ENCODE measurements at regions of chr3 and their contacts with region 1.

Region 1: GRCh38 chr3:46089237-46090011 is 62.1 kb upstream of the XCR1 start:
- DNase-seq: peak in 2 of 5 donors; percentile 34 to 86
- H3K4me3 ChIP-seq: no peak overlapping the region
- H3K27ac ChIP-seq: no peak overlapping the region
- H3K4me1 ChIP-seq: no peaks in the 10 kb centered on the region
- H3K27me3 ChIP-seq: no peaks in the 10 kb centered on the region
- CTCF ChIP-seq: no peak

Region 2: GRCh38 chr3:46186471-46187340 is 97.3 kb after region 1 on chr3:
- intact Hi-C with region 1: no loop called
- DNase-seq: no peak
- H3K4me3 ChIP-seq: no peak overlapping the region
- H3K27ac ChIP-seq: no peak overlapping the region
- H3K4me1 ChIP-seq: no peaks in the 10 kb centered on the region
- H3K27me3 ChIP-seq: no peaks in the 10 kb centered on the region
- CTCF ChIP-seq: no peak

Region 3: DNA sequence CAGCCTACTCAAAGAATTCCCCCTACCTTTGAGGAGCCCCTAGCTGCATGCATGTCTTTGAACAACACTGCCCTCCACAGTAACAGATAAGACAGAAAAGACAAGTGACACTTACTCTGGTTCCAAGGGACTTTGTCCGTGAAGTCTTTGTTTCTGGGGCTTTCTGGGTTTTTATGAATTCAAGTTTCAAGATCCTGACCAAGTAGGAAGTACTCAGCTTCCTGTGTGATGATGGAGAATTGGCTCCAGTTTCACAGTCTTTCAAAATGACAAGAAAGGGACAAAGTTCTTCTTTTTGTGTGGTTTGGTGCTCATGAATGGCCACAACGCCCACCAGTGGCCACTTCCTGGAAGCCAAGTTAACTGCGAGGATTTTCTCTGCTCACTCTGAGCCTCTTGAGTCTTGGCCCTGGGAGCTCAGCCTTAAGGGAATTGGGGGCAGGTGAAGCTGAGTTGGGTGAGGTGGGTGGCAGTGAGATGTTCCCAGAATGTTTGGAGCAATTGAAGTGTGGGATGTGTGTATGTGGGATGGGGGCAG is 118.8 kb after region 1 on chr3 and contains the start of gene CCR1:
- intact Hi-C with region 1: loop called (anchors 10 kb)
- DNase-seq: peak in 2 of 5 donors; percentile 13 to 47
- H3K4me3 ChIP-seq: peak within 1 kb of the TSS in 2 of 3 donors; percentile 31 to 36
- H3K27ac ChIP-seq: peak within 1 kb of the TSS; percentile 2 to 43
- H3K4me1 ChIP-seq: peaks cover 0 to 3% (median 0%) of the 10 kb centered on the region in 3 donors
- H3K27me3 ChIP-seq: no peaks in the 10 kb centered on the region
- CTCF ChIP-seq: peak; percentile 54
- total RNA-seq, gene CCR1: 13.8 TPM

Region 4: GRCh38 chr3:46334741-46335478 is 245.5 kb after region 1 on chr3:
- intact Hi-C with region 1: no loop called
- DNase-seq: peak in 2 of 5 donors; percentile 1 to 25
- H3K4me3 ChIP-seq: no peak overlapping the region
- H3K27ac ChIP-seq: no peak overlapping the region
- H3K4me1 ChIP-seq: peaks cover 0 to 2% (median 0%) of the 10 kb centered on the region in 3 donors
- H3K27me3 ChIP-seq: no peaks in the 10 kb centered on the region
- CTCF ChIP-seq: no peak

Region 5: DNA sequence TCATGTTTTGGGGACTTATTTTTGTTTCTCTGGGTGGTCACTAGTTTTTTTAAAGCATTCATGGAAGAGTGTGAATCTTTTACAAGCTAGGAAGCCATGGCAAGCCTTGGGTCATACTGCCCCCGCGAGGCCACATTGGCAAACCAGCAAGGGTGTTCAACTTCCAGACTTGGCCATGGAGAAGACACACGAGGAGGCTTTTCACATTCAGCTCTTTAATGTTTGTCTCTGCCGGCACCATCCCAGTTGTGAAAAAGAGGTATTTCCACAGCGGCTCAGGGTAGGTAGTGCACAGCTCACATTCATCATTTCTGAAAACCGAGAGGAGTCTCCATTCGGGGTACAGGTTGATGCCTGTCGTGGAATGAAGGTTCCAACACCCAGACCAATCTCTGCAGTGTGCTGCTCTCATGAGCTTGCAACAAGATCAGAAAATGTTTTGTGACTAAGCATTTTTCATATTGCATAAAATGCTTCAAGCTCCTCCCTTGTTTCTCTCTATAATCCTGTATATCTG is 289.1 kb after region 1 on chr3:
- intact Hi-C with region 1: loop called (anchors 10 kb)
- DNase-seq: peak; percentile 56 to 85 (median 67)
- H3K4me3 ChIP-seq: no peak overlapping the region
- H3K27ac ChIP-seq: no peak overlapping the region
- H3K4me1 ChIP-seq: peaks cover 0 to 2% (median 0%) of the 10 kb centered on the region in 3 donors
- H3K27me3 ChIP-seq: no peaks in the 10 kb centered on the region
- CTCF ChIP-seq: peak; percentile 57